AG04449 (cell line): ENCODE measurements at regions of chr13 and their contacts with region 1.

Region 1: GRCh38 chr13:45280751-45281634 is 60.0 kb downstream of the TPT1 start:
- DNase-seq: peak; percentile 29
- H3K4me3 ChIP-seq: no peak overlapping the region
- CTCF ChIP-seq: peak; percentile 88

Region 2: DNA sequence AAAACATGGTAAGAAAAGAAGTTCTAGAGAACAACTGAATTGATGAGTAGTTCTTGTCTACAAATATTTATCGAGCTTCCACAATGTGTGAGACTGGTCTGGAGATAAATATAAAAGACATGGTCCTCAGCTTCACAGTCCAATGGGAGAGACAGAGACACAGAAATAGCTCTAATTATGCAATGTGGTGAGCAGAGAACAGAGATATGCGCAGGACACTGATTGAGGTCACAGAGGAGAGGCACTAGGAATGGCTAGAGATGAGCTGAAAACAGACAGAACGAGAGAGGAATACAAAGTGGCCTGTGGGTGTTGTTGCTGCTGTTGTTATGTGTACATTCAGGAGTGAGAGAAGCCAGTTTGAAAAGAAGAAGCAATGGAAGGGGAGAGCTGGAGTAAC is 238.5 kb before region 1 on chr13:
- CTCF ChIA-PET with region 1: interaction called, 221 read pairs
- POLR2A ChIA-PET with region 1: no interaction called
- DNase-seq: no peak
- H3K4me3 ChIP-seq: no peak overlapping the region
- CTCF ChIP-seq: no peak

Region 3: GRCh38 chr13:45055198-45055901 is 225.6 kb before region 1 on chr13:
- CTCF ChIA-PET with region 1: interaction called, 221 read pairs
- POLR2A ChIA-PET with region 1: no interaction called
- DNase-seq: peak; percentile 80
- H3K4me3 ChIP-seq: peak overlapping the region; percentile 38
- CTCF ChIP-seq: no peak

Region 4: DNA sequence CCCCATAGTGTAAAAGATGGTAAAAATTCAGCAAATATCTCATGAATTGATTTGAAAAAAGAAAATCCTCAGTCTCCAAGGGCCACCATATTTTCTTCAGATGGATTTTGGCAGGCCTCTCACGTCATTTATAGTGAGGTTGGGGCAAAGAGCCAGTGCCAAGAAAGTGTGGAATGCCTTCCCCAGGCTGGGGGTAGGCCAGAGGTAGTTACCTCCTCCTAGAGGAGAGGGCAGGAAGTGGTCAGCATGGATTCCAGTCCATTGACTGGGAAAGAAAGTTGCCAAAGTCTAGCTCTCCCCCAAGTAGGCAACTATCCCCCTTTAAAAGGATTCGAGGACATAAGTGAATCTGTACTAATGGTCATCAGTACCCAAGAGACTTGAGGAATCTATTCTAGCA is 11.8 kb before region 1 on chr13:
- CTCF ChIA-PET with region 1: interaction called, 37 read pairs
- POLR2A ChIA-PET with region 1: no interaction called
- DNase-seq: no peak
- H3K4me3 ChIP-seq: no peak overlapping the region
- CTCF ChIP-seq: no peak

Region 5: DNA sequence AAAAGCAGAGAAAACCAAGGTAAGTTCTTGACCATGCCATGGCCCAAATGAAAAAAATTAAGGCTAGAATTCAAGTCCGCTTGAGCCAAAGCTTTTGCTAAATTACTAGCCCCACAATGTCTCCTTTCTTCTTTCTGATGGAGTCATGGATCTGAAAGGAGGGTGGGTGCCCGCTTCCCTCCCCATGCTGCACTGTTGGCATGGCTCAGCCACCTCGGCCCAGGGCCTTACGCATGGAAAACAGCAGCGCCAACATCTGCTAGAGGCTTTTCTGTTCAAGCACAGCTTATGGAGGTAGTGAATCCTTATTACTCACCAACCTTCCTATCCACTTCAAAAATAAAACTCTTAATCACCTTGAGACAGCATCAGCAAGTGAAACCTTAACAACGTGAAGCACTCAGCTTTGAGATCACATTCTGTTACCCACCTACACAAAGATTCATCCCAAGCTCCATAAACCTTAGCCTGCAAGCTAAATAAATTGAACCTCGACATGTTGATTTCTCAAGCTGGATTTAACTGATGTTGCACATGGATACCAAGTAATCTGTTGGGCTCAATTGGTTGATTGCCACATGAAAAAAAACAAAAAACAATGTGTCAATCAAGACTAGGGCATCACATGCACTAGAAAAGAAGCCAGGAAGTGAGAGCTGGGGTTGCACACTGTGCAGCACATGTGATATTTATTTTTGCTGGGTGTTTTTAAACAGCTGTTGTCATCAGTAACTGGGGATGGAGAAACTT is 16.6 kb after region 1 on chr13:
- CTCF ChIA-PET with region 1: interaction called, 50 read pairs
- POLR2A ChIA-PET with region 1: no interaction called
- DNase-seq: no peak
- H3K4me3 ChIP-seq: no peak overlapping the region
- CTCF ChIP-seq: no peak